GM10248 (cell line): ENCODE measurements at regions of chr20 and their contacts with region 1.

Region 1: DNA sequence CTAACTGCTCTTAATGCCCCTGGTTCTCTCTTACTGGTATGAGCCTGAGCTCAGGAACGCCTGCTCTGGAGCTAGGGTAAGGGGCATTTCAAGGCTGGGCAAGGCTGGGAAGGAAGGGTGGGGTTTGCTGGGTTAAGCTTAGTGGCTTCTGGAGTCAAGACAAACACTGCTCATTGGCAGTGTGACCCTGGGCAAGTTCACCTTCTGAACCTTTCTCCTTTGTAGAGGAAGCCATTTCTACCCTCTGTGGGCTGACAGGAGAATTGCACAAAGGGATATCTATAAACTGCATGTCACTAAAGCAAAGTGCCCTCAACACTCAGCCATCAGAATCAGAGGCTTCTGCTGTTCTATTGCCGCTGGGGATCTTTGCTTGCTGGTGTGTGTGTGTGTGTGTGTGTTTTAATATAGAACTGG is 20.3 kb upstream of the LRRN4 start:
- DNase-seq: no peak
- CTCF ChIP-seq: peak; percentile 15

Region 2: GRCh38 chr20:6091661-6092060 is 17.5 kb after region 1 on chr20:
- CTCF ChIA-PET with region 1: interaction called, 16 read pairs
- POLR2A ChIA-PET with region 1: no interaction called
- DNase-seq: no peak
- CTCF ChIP-seq: no peak

Region 3: GRCh38 chr20:6164421-6165341 is 90.5 kb after region 1 on chr20:
- CTCF ChIA-PET with region 1: no interaction called
- POLR2A ChIA-PET with region 1: no interaction called
- DNase-seq: no peak
- CTCF ChIP-seq: no peak

Region 4: DNA sequence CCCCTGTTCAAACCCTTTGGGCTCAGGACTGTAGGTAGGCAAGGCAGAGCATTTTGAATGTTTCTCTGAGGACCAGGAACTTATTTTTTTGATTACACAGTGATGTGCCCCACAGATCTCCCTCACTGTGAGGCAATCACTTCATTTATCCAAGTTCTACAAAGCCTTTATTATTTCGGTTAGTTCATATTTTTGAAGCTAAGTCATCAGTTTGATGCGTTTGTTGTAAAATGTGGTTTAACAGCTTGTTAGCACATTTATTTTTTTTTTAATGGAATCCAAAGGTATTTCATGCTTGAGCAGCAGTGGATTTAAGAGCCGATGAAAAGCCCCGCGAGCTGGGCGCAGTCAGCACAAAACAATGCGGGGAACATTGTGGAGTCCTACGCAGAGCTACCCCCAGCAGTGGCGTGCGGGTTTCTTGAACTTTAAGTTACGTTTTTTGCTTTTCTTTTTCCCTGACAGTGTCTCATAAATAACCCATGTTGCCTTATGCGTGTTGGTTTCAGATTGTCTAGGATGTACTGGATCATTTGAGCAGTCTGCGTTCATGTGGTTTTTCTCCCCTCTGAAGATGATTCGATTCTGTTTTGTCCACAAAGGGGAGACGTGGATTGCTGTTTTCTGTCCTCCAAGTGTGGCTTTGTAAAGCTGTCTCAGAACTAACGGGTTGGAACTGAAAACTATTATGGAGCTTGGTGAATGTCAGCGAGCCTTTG is 459.8 kb after region 1 on chr20:
- CTCF ChIA-PET with region 1: no interaction called
- POLR2A ChIA-PET with region 1: no interaction called
- DNase-seq: no peak
- CTCF ChIP-seq: no peak